GM13977 (cell line): ENCODE measurements at regions of chrX and their contacts with region 1.

Region 1: DNA sequence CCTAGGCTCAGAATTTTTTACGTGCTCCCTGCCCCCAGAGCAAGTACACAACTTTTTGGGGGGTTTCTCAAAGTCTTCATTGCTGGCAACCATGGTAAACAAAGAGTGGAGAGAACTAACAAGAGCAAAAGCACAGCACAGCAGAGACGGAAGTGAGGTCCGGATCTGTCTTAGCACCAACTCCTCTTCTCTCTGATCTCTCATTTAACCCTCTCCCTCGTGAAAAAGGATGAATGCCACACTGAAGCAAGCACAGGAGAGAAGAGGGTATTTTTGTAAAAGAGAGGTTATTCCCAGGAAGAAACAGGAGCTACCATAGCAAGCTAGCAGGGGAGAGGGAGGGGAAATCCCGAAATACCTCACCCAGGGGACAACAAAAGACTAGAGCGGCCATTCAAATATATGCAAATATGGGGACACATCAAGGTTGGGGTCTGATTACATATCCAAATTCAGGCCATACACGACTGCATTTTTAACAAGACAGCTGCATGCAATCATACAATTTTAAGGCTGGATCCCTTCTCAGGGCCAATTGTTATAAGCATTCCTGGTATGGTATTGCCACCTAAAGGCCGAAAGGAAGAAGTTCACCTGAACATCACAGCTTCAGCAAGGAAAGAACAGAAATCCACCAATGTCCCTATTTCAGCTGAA is 46.6 kb downstream of the CD40LG start:
- DNase-seq: peak; percentile 51
- CTCF ChIP-seq: peak; percentile 64

Region 2: DNA sequence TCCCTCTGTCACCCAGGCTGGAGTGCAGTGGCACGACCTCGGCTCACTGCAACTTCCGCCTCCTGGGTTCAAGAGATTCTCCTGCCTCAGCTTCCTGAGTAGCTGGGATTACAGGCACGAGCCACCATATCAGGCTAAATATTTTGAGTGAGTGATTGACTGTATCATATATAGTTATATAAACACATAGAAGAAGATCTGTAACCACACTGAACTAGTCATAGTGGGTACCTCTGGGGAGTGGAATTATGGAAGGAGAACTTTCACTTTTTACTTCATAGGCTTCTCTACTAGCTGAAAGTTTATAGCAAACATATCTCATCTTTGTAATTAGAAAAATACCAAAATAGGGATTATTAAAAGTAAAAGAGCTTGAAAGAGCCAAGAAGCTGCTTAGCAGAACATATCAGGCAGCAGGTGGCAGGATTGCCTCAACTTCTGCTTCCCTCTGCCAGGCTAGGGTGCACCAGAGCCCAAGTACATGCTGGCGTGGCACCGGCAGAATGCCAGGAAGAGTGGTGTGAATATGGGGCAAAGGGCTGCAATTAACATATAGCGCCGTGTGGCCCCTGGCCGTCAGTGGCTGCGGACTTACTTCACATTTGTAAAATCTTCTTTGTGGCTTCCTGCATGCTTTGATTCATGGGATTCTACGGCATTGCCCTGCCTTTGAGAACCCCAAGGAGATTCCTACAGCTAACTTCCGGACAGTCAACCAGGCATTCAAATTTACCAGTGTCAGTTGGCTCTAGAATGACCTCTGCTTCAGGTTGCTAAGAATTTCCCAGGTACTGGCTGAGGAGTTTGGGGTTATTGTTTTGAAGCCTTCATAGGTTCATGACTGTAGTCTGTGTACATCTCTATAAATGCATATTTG is 86.0 kb before region 1 on chrX:
- in situ Hi-C with region 1: loop called (anchors 10 kb)
- DNase-seq: no peak
- CTCF ChIP-seq: peak; percentile 33